Caco-2 (cell line): ENCODE measurements at regions of chr4 and their contacts with region 1.

Region 1: DNA sequence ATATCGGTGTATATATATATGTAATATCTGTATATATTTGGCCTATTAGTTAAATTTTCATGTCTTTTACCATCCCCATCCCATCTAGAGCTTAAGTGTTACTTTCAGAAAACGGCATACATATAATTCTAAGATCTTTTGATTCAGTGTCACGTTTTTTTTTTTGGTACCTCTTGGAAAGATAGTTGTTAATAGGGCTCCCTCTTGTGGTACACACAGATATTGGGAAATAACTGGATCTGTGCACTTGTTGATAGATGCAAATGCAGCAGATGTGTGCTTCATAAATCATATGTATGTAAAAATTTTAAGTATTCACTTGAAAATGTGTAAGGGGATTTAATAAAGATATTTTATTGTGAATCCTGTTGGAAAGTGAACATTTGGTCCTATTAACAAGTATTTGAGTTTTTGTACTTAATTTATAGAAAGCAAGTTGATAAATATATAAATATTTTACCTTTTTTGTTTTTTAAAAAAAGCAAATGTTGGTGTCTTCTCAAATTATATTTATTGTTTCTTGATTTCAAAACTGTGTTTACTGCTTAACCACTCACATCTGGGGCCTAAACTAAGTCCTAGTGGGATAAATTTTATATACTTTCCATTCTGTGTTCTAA is 74.7 kb downstream of the PAQR3 start:
- DNase-seq: peak in 1 of 2 experiments; percentile 67
- H3K4me3 ChIP-seq: no peak overlapping the region
- H3K4me3 Mint-ChIP-seq: no peak overlapping the region
- H3K27ac Mint-ChIP-seq: no peak overlapping the region
- H3K4me1 ChIP-seq: peaks cover 17% of the 10 kb centered on the region
- H3K4me1 Mint-ChIP-seq: peaks cover 16% of the 10 kb centered on the region
- H3K27me3 ChIP-seq: no peaks in the 10 kb centered on the region
- H3K27me3 Mint-ChIP-seq: no peaks in the 10 kb centered on the region
- CTCF ChIP-seq: peak; percentile 55 to 75

Region 2: DNA sequence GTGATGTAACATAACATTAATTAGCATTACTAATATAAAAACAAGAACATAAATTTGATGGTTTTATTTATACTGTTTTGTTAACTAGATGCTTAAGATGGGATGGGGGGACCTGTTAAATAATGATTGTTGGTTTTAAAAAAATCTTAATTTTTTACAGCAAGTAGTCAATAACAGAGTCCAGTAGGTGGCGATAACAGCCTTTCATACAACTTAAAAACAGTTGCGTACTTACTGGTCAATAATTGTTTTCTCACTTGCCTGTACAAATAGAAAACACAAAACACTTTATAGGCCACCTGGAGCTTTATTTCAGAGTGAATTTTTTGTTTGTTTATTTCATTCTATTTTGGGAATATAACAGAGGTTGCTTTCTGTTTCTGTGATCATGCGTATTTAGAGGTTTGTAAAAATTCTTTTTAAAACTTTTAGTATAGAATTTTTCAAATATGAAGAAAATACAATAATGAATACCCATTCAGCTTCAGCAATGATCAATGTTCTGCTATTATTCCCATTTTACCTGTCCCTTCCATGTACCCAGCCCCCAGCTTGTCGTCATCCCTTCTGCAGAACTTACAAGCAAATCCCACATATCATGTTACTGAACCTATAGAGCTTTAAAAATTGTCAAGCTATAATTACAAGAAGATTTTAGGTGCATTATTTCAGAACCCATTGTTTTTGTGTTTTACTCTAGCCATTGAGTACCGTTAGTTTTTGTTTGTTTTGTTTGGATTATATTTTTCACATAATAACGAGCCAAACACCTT is 904.8 kb before region 1 on chr4:
- CTCF ChIA-PET with region 1: no interaction called
- POLR2A ChIA-PET with region 1: no interaction called
- intact Hi-C with region 1: loop called (anchors 10 kb)
- DNase-seq: peak in 1 of 2 experiments; percentile 47
- H3K4me3 ChIP-seq: no peak overlapping the region
- H3K4me3 Mint-ChIP-seq: no peak overlapping the region
- H3K27ac Mint-ChIP-seq: no peak overlapping the region
- H3K4me1 ChIP-seq: no peaks in the 10 kb centered on the region
- H3K4me1 Mint-ChIP-seq: no peaks in the 10 kb centered on the region
- H3K27me3 ChIP-seq: no peaks in the 10 kb centered on the region
- H3K27me3 Mint-ChIP-seq: no peaks in the 10 kb centered on the region
- CTCF ChIP-seq: peak; percentile 63

Region 3: GRCh38 chr4:78551479-78552351 is 312.8 kb before region 1 on chr4 and contains the start of gene ANXA3:
- CTCF ChIA-PET with region 1: no interaction called
- POLR2A ChIA-PET with region 1: no interaction called
- intact Hi-C with region 1: loop called (anchors 1 kb)
- DNase-seq: peak; percentile 87 to 90
- H3K4me3 ChIP-seq: peak within 1 kb of the TSS; percentile 74
- H3K4me3 Mint-ChIP-seq: peak within 1 kb of the TSS; percentile 86
- H3K27ac Mint-ChIP-seq: peak within 1 kb of the TSS; percentile 90
- H3K4me1 ChIP-seq: peaks cover 55% of the 10 kb centered on the region
- H3K4me1 Mint-ChIP-seq: peaks cover 27% of the 10 kb centered on the region
- H3K27me3 ChIP-seq: no peaks in the 10 kb centered on the region
- H3K27me3 Mint-ChIP-seq: no peaks in the 10 kb centered on the region
- CTCF ChIP-seq: no peak
- total RNA-seq, gene ANXA3: 327 and 361 TPM in 2 replicates

Region 4: GRCh38 chr4:78612398-78613178 is 251.9 kb before region 1 on chr4:
- CTCF ChIA-PET with region 1: no interaction called
- POLR2A ChIA-PET with region 1: no interaction called
- intact Hi-C with region 1: loop called (anchors 1 kb)
- DNase-seq: no peak
- H3K4me3 ChIP-seq: no peak overlapping the region
- H3K4me3 Mint-ChIP-seq: no peak overlapping the region
- H3K27ac Mint-ChIP-seq: no peak overlapping the region
- H3K4me1 ChIP-seq: peaks cover 9% of the 10 kb centered on the region
- H3K4me1 Mint-ChIP-seq: peaks cover 41% of the 10 kb centered on the region
- H3K27me3 ChIP-seq: no peaks in the 10 kb centered on the region
- H3K27me3 Mint-ChIP-seq: no peaks in the 10 kb centered on the region
- CTCF ChIP-seq: peak in 1 of 2 experiments; percentile 20

Region 5: GRCh38 chr4:78644744-78645330 is 219.7 kb before region 1 on chr4:
- CTCF ChIA-PET with region 1: no interaction called
- POLR2A ChIA-PET with region 1: no interaction called
- intact Hi-C with region 1: loop called (anchors 1 kb)
- DNase-seq: peak; percentile 57 to 66
- H3K4me3 ChIP-seq: no peak overlapping the region
- H3K4me3 Mint-ChIP-seq: no peak overlapping the region
- H3K27ac Mint-ChIP-seq: no peak overlapping the region
- H3K4me1 ChIP-seq: peaks cover 7% of the 10 kb centered on the region
- H3K4me1 Mint-ChIP-seq: peaks cover 18% of the 10 kb centered on the region
- H3K27me3 ChIP-seq: no peaks in the 10 kb centered on the region
- H3K27me3 Mint-ChIP-seq: no peaks in the 10 kb centered on the region
- CTCF ChIP-seq: peak; percentile 67 to 86

Region 6: DNA sequence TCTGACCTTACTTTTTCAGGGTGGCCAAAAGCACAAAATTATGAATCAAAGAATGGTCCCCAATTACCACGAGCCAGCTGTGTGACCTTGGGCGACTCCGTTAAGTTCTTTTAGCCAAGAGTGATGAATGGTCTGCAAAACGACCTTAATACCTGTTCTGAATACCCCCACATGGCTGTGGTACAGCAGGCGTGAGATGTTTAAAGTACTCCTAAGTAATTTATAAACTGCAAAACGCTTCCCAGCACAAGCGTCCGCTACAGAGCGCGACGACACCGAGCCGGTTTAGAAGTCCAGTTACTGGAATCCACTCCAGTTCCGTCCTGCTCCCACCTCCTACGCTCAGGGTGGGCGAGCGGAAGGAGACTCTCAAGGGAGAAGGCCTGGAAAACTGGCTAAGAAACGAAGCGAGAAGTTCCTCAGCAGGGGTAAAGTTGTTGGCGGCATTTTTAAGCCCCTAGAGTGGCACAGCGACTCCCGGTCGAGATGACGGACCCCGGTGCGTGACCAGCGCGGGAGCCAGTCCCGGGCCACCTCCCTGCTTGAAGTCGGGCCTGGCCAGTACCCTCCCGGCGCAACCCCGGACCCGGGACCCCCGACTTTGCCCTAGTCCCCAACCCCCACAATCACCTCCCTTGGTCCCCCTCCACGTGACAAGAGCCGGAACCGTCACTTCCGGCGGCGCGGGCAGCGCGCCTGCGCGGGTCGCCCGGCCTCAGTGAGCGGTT is 89.0 kb before region 1 on chr4:
- CTCF ChIA-PET with region 1: no interaction called
- POLR2A ChIA-PET with region 1: interaction called, 4 read pairs
- intact Hi-C with region 1: loop called (anchors 1 kb)
- DNase-seq: peak; percentile 83 to 86
- H3K4me3 ChIP-seq: peak overlapping the region; percentile 57
- H3K4me3 Mint-ChIP-seq: peak overlapping the region; percentile 93
- H3K27ac Mint-ChIP-seq: peak overlapping the region; percentile 93
- H3K4me1 ChIP-seq: peaks cover 25% of the 10 kb centered on the region
- H3K4me1 Mint-ChIP-seq: no peaks in the 10 kb centered on the region
- H3K27me3 ChIP-seq: no peaks in the 10 kb centered on the region
- H3K27me3 Mint-ChIP-seq: no peaks in the 10 kb centered on the region
- CTCF ChIP-seq: no peak